ENCODE measurements at regions of chr1 and their contacts with region 1.

Region 1: GRCh38 chr1:43946236-43947060 is at the start of gene IPO13:
- DNase-seq: peak; percentile 98
- ATAC-seq: peak; percentile 95
- H3K4me3 Mint-ChIP-seq: peak within 1 kb of the TSS; percentile 91
- H3K27ac Mint-ChIP-seq: peak within 1 kb of the TSS; percentile 95
- H3K4me1 Mint-ChIP-seq: peaks cover 43% of the 10 kb centered on the region
- H3K27me3 Mint-ChIP-seq: no peaks in the 10 kb centered on the region
- CTCF ChIP-seq: no peak
- total RNA-seq, gene IPO13: 18.0 and 24.8 TPM in 2 replicates

Region 2: DNA sequence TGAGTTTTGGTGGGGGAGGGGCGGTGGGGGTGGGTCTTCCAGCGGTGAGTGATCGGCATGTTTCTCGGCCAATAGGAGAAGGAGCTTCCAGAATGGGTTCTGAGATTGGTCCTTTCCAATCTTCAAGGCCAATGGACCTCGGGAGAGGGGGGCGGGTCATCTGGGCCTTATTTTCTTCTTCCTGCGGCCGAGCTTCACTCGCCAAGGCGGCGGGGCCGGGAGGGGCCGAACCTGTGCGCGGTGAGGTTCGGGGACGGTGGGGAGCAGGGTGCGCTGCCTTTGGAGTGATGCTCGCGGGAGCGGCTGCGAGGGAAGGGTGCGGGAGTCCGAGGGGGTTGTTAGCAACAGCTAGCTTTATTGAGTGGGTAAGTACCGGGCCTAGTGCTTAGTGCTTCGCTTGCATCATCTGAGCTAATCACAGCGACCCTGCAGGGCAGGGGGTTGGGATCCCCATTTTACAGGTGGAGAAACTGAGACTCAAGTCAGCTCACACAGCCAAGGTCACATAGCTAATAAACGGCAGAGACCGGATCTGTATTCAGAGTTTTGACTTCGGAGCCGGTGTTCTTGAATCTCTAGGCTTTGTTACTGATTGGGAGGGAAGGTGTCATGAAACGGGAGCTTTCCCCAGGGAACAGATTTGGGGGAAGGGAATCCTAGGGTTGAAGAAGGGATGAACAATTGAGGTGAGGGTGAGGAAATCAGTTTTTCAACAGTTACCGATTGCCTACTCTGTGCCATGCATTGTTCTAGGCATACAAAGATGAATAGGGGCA is 295.9 kb before region 1 on chr1:
- CTCF ChIA-PET with region 1: no interaction called
- POLR2A ChIA-PET with region 1: interaction called, 19 read pairs
- intact Hi-C with region 1: loop called (anchors 1 kb)
- DNase-seq: peak; percentile 82
- ATAC-seq: peak; percentile 75
- H3K4me3 Mint-ChIP-seq: peak overlapping the region; percentile 98
- H3K27ac Mint-ChIP-seq: peak overlapping the region; percentile 97
- H3K4me1 Mint-ChIP-seq: peaks cover 46% of the 10 kb centered on the region
- H3K27me3 Mint-ChIP-seq: peaks cover 2% of the 10 kb centered on the region
- CTCF ChIP-seq: no peak

Region 3: DNA sequence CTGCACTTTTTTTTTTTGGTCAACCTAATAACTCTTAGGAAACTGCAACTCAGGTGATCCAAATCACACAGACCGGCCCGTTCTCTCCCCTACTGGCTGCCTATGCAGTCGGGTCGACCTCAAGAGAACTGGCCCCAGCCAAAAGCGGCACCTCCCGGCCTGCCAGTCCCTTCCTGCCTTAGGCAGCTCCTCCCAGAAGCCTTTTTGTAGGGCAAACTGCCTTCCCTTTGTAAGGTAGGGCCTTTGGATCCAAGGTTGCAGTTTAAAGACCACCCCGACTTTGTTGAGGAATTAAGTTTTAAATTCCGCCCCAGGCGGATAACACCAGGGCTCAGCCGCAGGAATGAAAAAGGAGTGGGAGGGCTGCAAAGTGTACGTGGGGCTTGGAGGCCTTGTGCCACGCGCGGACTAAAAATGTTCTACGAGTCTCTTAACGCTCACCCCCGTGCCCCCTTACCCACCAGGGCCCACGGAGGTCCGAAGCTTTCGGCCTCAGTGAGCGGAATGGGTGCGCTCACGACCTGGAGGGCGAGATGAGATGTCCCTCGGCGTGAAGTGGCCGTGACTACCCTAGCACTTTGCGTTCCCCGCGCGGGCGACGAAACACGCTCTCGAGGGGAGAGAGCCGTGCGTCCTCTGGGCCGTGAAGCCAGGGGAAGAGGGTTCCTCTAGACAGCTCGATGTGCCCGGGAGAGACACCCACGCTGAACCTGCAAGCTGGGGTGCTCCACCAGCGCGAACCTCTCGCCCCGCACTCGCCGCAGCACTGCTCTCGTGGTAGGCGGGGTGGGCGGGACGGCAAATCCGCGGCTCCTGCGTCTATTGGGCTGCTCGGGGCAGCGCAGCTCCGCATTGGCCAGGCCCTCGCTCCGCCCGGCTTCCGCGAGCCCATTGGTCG is 239.6 kb before region 1 on chr1:
- CTCF ChIA-PET with region 1: no interaction called
- POLR2A ChIA-PET with region 1: no interaction called
- intact Hi-C with region 1: loop called (anchors 1 kb)
- DNase-seq: no peak
- ATAC-seq: peak; percentile 97
- H3K4me3 Mint-ChIP-seq: peak overlapping the region; percentile 86
- H3K27ac Mint-ChIP-seq: peak overlapping the region; percentile 63
- H3K4me1 Mint-ChIP-seq: peaks cover 33% of the 10 kb centered on the region
- H3K27me3 Mint-ChIP-seq: no peaks in the 10 kb centered on the region
- CTCF ChIP-seq: no peak

Region 4: GRCh38 chr1:43934101-43934985 is 12.1 kb before region 1 on chr1:
- CTCF ChIA-PET with region 1: interaction called, 26 read pairs
- POLR2A ChIA-PET with region 1: interaction called, 5 read pairs
- intact Hi-C with region 1: no loop called
- DNase-seq: peak; percentile 37
- ATAC-seq: peak; percentile 67
- H3K4me3 Mint-ChIP-seq: peak overlapping the region; percentile 62
- H3K27ac Mint-ChIP-seq: no peak overlapping the region
- H3K4me1 Mint-ChIP-seq: peaks cover 19% of the 10 kb centered on the region
- H3K27me3 Mint-ChIP-seq: peaks cover 22% of the 10 kb centered on the region
- CTCF ChIP-seq: no peak

Region 5: DNA sequence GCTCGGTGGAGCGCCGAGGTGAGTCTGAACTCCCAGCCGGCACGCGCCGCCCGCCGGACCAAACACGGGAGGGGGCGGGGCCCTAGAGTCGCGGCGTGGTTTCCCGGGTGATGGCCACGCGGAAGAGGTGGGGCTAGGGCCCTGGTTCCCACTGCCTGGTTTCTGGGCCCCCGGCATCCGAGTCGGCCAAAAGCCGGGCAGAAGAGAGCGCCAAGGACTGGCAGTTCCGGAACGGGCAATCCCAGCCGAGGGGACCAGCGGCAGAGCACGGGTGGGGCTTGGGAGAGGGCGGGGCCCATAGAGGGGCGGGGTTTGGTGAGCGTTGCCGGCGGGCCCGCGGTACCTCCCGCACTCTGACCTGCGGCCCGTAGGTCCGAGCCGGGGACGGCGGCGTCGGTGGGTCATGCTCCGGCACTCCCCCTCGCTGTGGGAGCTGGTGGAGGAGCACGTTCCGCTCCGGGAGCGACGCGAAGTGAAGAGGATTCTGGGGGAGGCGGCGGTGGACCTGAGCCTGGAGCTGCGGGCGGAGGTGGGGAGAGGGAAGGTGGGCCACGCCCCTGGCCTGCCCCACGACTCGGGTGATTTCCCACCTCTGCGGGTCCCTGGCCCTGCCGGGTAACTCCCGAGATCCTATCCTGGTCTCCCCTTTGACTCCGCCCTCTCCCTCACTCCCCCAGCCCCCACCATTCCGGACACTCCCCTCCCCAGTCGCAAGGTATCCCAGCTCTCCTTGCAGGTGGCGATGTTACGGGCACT is 45.2 kb after region 1 on chr1 and contains the start of gene CCDC24:
- CTCF ChIA-PET with region 1: no interaction called
- POLR2A ChIA-PET with region 1: interaction called, 6 read pairs
- intact Hi-C with region 1: loop called (anchors 1 kb)
- DNase-seq: peak; percentile 82
- ATAC-seq: peak; percentile 86
- H3K4me3 Mint-ChIP-seq: peak within 1 kb of the TSS; percentile 96
- H3K27ac Mint-ChIP-seq: peak within 1 kb of the TSS; percentile 88
- H3K4me1 Mint-ChIP-seq: peaks cover 36% of the 10 kb centered on the region
- H3K27me3 Mint-ChIP-seq: no peaks in the 10 kb centered on the region
- CTCF ChIP-seq: no peak
- total RNA-seq, gene CCDC24: 8.1 and 15.1 TPM in 2 replicates

Region 6: DNA sequence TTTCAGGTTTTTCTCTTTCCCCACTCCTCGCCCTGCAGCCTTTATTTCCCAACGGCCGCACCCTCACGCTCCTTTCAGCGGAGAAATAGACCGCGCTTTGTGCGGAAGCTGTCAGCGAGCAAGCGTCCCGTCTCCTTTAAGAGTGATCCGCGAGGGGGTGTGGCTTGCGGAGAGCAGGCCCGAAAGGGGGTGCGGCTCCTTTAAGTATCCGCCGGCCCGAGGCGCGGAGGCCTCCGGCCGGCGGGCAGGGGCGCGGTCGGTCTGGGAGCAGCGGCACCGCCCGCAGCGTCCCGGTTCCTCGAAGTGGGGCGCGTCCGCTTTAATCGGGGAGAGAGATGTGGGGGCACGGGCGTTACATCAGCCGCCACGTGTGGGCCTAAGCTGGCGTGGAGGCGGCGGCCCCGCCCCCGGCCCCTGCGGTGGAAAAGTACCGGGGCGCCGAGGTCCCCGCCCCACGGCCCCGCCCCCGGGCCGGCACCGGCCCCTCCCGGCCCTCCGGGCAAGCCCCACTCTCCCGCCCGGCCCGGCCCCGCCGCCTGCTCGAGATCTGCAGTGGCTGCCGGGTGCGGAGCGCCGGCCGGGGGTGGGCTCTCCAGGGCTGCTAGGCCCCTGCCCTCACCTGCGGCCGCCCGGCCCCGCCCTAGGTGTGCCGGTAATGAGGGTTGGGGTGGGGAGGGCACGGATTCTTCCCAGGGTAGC is 83.6 kb after region 1 on chr1:
- CTCF ChIA-PET with region 1: no interaction called
- POLR2A ChIA-PET with region 1: interaction called, 3 read pairs
- intact Hi-C with region 1: loop called (anchors 1 kb)
- DNase-seq: peak; percentile 93
- ATAC-seq: peak; percentile 76
- H3K4me3 Mint-ChIP-seq: peak overlapping the region; percentile 95
- H3K27ac Mint-ChIP-seq: peak overlapping the region; percentile 97
- H3K4me1 Mint-ChIP-seq: peaks cover 32% of the 10 kb centered on the region
- H3K27me3 Mint-ChIP-seq: no peaks in the 10 kb centered on the region
- CTCF ChIP-seq: no peak

Region 7: GRCh38 chr1:44684525-44684924 is 738.1 kb after region 1 on chr1:
- CTCF ChIA-PET with region 1: no interaction called
- POLR2A ChIA-PET with region 1: no interaction called
- intact Hi-C with region 1: no loop called
- DNase-seq: no peak
- ATAC-seq: no peak
- H3K4me3 Mint-ChIP-seq: no peak overlapping the region
- H3K27ac Mint-ChIP-seq: no peak overlapping the region
- H3K4me1 Mint-ChIP-seq: peaks cover 8% of the 10 kb centered on the region
- H3K27me3 Mint-ChIP-seq: no peaks in the 10 kb centered on the region
- CTCF ChIP-seq: no peak

Measured in activated B cell treated with CpG ODN at 0.5 μM for 24 hours (primary cell).